ENCODE measurements at regions of chr12 and their contacts with region 1.

Region 1: DNA sequence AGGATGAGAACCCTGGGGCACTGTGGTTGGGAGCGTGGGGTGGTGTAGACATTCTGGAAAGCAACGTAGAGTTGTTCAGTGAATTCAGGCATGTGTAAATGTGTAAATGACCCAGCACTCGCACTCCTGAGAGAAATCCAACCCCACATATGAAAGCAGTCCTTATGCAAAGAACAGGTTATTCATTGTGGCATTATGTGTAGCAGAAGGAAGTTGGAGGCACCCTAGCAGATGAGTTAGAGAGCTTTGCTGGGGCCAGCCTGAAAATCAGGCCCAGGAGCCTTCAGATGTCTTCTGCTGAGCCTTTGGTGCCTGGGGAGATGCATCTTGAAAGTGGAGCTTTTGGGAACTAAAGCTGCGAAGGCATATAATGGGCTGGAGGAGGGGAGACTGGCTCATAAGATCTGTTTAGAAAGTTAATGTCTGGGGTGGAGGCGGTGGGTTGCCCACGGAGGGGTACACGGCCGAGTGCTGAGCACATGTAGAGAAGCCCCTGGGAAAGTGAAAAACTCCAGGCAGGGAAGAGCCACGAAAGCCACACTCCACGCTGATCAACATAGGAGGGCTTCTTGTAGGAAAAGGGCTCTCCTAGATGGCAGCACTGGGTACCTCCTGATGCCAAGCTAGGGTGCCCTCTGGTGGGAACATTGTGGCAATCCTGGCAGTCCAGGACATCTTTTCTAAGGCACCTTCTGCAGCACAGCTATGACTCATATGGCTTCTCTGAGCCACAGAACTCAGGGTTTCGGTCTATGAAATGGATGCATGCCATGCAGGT is 6.0 kb upstream of the KRT83 start:
- DNase-seq: peak; percentile 86
- H3K4me3 Mint-ChIP-seq: no peak overlapping the region
- H3K27ac Mint-ChIP-seq: peak overlapping the region; percentile 64
- H3K4me1 Mint-ChIP-seq: peaks cover 23% of the 10 kb centered on the region
- H3K27me3 Mint-ChIP-seq: peaks cover 11% of the 10 kb centered on the region
- CTCF ChIP-seq: peak; percentile 86

Region 2: GRCh38 chr12:52156736-52157565 is 170.3 kb before region 1 on chr12:
- CTCF ChIA-PET with region 1: interaction called, 5 read pairs
- intact Hi-C with region 1: loop called (anchors 2 kb)
- DNase-seq: peak; percentile 84
- H3K4me3 Mint-ChIP-seq: no peak overlapping the region
- H3K27ac Mint-ChIP-seq: no peak overlapping the region
- H3K4me1 Mint-ChIP-seq: peaks cover 55% of the 10 kb centered on the region
- H3K27me3 Mint-ChIP-seq: no peaks in the 10 kb centered on the region
- CTCF ChIP-seq: peak; percentile 80

Region 3: GRCh38 chr12:52243856-52244614 is 83.2 kb before region 1 on chr12:
- CTCF ChIA-PET with region 1: interaction called, 4 read pairs
- intact Hi-C with region 1: loop called (anchors 10 kb)
- DNase-seq: peak; percentile 85
- H3K4me3 Mint-ChIP-seq: peak overlapping the region; percentile 61
- H3K27ac Mint-ChIP-seq: peak overlapping the region; percentile 96
- H3K4me1 Mint-ChIP-seq: peaks cover 65% of the 10 kb centered on the region
- H3K27me3 Mint-ChIP-seq: no peaks in the 10 kb centered on the region
- CTCF ChIP-seq: no peak

Region 4: DNA sequence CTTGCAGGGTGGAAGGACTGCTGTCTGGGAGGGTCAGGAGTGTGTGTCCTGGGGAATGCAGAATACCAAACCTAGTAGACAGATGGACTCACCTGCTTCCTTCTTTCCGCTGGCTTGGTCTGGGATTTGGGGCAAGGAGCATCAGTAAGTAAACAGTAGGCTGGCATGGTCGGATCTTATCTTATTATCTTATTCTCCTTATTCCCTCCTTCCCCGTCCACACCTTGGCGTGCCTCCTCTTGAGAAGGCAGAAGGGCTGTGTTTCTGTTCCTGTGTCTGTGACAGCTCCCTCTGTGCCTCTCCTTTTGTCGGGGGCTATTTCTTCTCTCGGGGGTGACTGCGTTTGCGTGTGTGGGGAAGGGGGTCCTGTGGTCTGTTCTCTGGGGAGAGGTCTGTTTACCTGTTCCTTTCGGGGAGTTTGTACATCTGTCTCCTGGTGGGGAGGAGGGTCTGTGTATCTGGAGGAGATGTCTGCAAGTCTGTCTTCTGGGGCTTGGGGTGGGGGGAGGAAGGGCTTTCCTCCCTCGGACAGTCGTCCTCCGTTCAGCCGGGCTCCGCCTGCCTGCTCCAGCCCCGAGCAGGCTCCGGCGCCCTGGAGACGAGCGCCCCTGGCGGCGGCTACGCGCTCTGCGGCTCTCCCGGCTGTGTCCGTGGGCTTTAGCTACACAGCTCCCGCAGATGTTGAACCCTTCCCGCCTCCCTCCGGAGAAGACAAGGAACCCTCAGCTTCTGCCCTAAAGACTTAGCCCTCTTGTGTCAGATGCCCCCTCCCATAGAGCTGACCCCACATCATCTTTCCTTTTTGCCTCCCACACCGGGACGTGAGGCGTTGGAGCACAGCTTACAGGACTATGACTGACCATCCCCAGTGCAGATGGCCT is 48.5 kb before region 1 on chr12:
- CTCF ChIA-PET with region 1: interaction called, 20 read pairs
- intact Hi-C with region 1: no loop called
- DNase-seq: peak; percentile 87
- H3K4me3 Mint-ChIP-seq: peak overlapping the region; percentile 54
- H3K27ac Mint-ChIP-seq: peak overlapping the region; percentile 100
- H3K4me1 Mint-ChIP-seq: peaks cover 40% of the 10 kb centered on the region
- H3K27me3 Mint-ChIP-seq: no peaks in the 10 kb centered on the region
- CTCF ChIP-seq: peak; percentile 82